Ovary (tissue), 10 donors: ENCODE measurements at regions of chr15 and their contacts with region 1.

Region 1: GRCh38 chr15:31488426-31489204 is 162.0 kb downstream of the KLF13 start:
- DNase-seq: peak in 3 of 5 donors; percentile 43 to 68 (median 56)
- H3K4me3 ChIP-seq: no peak overlapping the region
- H3K27ac ChIP-seq: peak overlapping the region in 1 of 2 donors; percentile 17
- H3K4me1 ChIP-seq: no peaks in the 10 kb centered on the region
- H3K27me3 ChIP-seq: no peaks in the 10 kb centered on the region
- CTCF ChIP-seq: peak; percentile 43 to 91 (median 89)
- EP300 ChIP-seq: no peak
- POLR2A ChIP-seq: no peak

Region 2: GRCh38 chr15:30670056-30670455 is 818.6 kb before region 1 on chr15:
- intact Hi-C with region 1: loop called in 1 of 4 experiments (anchors 10 kb)
- DNase-seq: no peak
- H3K4me3 ChIP-seq: no peak overlapping the region
- H3K27ac ChIP-seq: no peak overlapping the region
- H3K4me1 ChIP-seq: no peaks in the 10 kb centered on the region
- H3K27me3 ChIP-seq: no peaks in the 10 kb centered on the region
- CTCF ChIP-seq: no peak
- EP300 ChIP-seq: no peak
- POLR2A ChIP-seq: no peak

Region 3: GRCh38 chr15:31200735-31201151 is 287.9 kb before region 1 on chr15:
- intact Hi-C with region 1: loop called in 3 of 4 experiments (anchors 5 to 10 kb)
- DNase-seq: peak in 4 of 5 donors; percentile 57 to 76 (median 59)
- H3K4me3 ChIP-seq: no peak overlapping the region
- H3K27ac ChIP-seq: no peak overlapping the region
- H3K4me1 ChIP-seq: no peaks in the 10 kb centered on the region
- H3K27me3 ChIP-seq: no peaks in the 10 kb centered on the region
- CTCF ChIP-seq: peak in 2 of 3 donors; percentile 22 to 31
- EP300 ChIP-seq: no peak
- POLR2A ChIP-seq: no peak

Region 4: DNA sequence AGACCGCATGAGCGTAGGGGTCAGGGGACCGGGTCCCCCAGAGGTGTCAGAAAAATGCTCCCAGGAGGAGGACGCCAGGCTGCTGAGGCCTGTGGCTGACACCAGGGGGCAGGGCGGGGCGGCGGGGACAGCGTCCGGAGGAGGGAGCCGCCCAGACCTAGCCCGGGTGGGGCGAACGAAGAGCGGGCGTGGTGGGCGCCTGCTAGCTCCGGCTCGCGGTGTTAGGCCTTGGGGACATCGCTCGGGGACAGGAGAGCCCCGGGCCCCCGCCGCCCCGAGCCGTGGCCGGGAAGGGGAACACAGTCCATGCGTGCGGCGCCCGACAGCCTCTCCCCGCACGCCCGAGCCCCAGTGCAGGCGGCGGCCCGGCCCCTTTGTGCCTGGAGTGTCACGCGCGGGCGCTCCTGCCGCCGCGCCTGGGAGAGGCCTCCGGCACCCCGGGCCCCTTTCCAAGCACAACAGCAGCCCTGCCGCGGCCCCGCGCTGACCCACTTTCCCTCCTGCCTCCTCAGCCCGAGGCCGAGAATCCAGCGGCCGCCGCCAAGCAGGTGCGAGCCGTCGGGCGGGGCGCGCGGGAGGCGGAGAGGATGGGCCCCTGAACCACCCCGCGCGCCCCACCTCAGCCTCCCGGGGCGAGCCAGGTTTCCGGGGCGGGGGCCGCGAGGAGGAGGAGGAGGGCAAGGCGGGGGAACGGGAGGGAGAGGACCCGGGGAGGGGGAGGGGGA is 273.0 kb before region 1 on chr15:
- intact Hi-C with region 1: loop called in 1 of 4 experiments (anchors 5 kb)
- DNase-seq: peak; percentile 66 to 87 (median 75)
- H3K4me3 ChIP-seq: peak overlapping the region; percentile 42
- H3K27ac ChIP-seq: peak overlapping the region; percentile 75 to 81
- H3K4me1 ChIP-seq: peaks cover 8% of the 10 kb centered on the region
- H3K27me3 ChIP-seq: no peaks in the 10 kb centered on the region
- CTCF ChIP-seq: peak; percentile 57 to 79 (median 72)
- EP300 ChIP-seq: no peak
- POLR2A ChIP-seq: no peak

Region 5: DNA sequence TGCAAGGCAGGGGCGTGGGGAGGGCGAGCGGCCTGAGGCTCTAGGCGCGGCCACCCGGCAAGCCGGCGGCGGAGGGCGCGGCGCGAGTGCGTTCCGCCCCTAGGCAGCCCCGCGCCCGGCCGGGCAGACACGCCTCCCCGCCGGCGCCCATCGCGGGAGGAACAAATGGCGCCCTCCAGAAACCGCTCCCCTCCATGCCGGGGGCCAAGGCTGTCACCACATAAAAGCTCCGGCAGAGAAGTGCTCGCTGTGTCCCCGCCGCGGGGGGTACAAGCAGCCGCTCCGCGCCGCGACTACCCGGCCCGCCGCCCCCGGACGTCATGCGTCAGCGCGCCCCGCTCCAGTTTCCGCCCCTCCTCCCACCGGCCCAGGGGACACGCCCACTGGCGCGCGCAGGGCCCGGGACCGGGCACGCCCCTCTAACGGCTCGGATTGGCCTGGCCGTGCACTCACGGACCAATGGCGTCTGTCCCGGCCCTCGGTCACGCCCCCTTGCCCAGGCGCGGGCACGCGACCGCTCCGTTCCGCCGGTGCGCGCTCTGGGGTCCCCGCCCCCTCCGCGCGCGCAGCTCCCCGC is 162.4 kb before region 1 on chr15:
- intact Hi-C with region 1: loop called in 1 of 4 experiments (anchors 5 kb)
- DNase-seq: peak; percentile 93 to 100 (median 99)
- H3K4me3 ChIP-seq: peak overlapping the region; percentile 50
- H3K27ac ChIP-seq: peak overlapping the region; percentile 96 to 97
- H3K4me1 ChIP-seq: peaks cover 6% of the 10 kb centered on the region
- H3K27me3 ChIP-seq: no peaks in the 10 kb centered on the region
- CTCF ChIP-seq: peak in 2 of 3 donors; percentile 20 to 39
- EP300 ChIP-seq: peak; percentile 56
- POLR2A ChIP-seq: peak; percentile 94

Region 6: DNA sequence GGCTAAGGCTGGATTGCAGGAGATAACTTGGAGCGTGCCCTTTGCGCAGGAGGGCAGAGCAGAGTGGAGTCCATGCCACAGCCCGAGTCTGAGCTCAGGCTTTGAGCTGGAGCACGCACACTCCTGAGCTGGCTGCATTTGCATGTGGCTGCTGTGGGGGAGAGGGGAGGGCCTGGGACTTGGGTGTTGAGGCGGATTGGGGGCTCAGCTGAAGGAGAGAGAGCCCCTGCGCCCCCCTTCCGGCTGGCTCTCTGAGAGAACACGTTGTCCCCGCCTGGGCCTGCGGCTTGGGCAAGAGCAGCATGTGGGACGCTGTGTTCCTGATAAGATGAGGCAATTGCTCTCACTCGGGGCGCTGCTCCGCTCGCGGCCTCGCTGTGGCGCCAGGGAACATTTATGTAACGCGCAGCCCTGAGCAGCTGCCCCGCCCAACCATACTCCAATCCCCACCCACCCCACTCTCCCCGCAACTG is 122.9 kb before region 1 on chr15:
- intact Hi-C with region 1: loop called in 1 of 4 experiments (anchors 10 kb)
- DNase-seq: peak; percentile 82 to 98 (median 92)
- H3K4me3 ChIP-seq: peak overlapping the region; percentile 29
- H3K27ac ChIP-seq: peak overlapping the region; percentile 63 to 79
- H3K4me1 ChIP-seq: peaks cover 12% of the 10 kb centered on the region
- H3K27me3 ChIP-seq: no peaks in the 10 kb centered on the region
- CTCF ChIP-seq: peak; percentile 9 to 48 (median 40)
- EP300 ChIP-seq: peak; percentile 100
- POLR2A ChIP-seq: peak; percentile 49

Region 7: GRCh38 chr15:31391687-31392671 is 96.6 kb before region 1 on chr15:
- intact Hi-C with region 1: no loop called
- DNase-seq: peak; percentile 64 to 91 (median 80)
- H3K4me3 ChIP-seq: peak overlapping the region; percentile 55
- H3K27ac ChIP-seq: peak overlapping the region; percentile 62 to 78
- H3K4me1 ChIP-seq: peaks cover 4% of the 10 kb centered on the region
- H3K27me3 ChIP-seq: no peaks in the 10 kb centered on the region
- CTCF ChIP-seq: no peak
- EP300 ChIP-seq: peak; percentile 26
- POLR2A ChIP-seq: peak; percentile 86

Region 8: DNA sequence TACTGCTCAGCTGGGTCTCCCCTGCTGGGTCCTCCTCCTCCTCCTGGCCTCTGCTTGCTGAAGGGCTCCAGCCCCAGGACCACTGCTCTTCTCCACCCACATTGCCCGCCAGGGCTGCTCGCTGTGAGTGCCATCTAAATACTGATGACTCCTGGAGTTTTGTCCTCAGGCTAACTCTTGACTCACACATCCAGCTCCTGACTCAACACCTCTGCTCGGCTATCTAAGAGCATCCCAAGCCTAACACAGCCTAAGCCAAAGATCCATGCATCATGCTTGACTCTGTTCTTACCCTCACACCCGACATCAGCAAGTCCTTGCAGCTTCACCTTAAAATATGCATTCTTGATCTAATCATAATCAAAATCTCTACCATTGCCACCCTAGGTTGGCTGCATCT is 98.2 kb after region 1 on chr15:
- intact Hi-C with region 1: no loop called
- DNase-seq: no peak
- H3K4me3 ChIP-seq: no peak overlapping the region
- H3K27ac ChIP-seq: no peak overlapping the region
- H3K4me1 ChIP-seq: no peaks in the 10 kb centered on the region
- H3K27me3 ChIP-seq: no peaks in the 10 kb centered on the region
- CTCF ChIP-seq: no peak
- EP300 ChIP-seq: no peak
- POLR2A ChIP-seq: no peak